Thyroid gland (tissue), 4 donors: ENCODE measurements at regions of chrX and their contacts with region 1.

Region 1: GRCh38 chrX:65948103-65948502 is 91.8 kb downstream of the VSIG4 start:
- DNase-seq: no peak
- H3K4me3 ChIP-seq: no peak overlapping the region
- H3K27ac ChIP-seq: no peak overlapping the region
- H3K4me1 ChIP-seq: no peaks in the 10 kb centered on the region
- H3K27me3 ChIP-seq: no peaks in the 10 kb centered on the region
- CTCF ChIP-seq: no peak
- POLR2A ChIP-seq: no peak

Region 2: DNA sequence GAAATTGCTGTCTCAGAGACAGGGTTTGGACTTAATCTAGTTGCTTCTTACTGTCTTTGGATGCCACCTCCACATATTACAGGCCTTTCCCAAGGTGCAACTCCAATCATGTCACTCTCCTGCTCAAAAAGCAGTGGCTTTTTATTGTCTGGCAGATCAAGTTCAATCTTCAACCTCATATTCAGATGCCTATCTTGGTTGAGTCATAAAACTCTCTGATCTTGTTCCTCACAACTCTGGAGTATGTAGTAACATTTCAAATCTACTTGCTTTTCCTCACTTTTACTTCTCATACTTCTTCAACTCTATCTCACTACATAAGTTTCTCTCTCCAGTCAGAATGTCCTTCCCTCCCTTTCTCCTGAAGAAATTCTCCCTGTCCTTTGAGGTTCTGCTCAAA is 88.8 kb before region 1 on chrX:
- intact Hi-C with region 1: loop called (anchors 10 kb)
- DNase-seq: no peak
- H3K4me3 ChIP-seq: no peak overlapping the region
- H3K27ac ChIP-seq: no peak overlapping the region
- H3K4me1 ChIP-seq: no peaks in the 10 kb centered on the region
- H3K27me3 ChIP-seq: no peaks in the 10 kb centered on the region
- CTCF ChIP-seq: no peak
- POLR2A ChIP-seq: no peak

Region 3: GRCh38 chrX:65997978-65998717 is 50.0 kb after region 1 on chrX:
- intact Hi-C with region 1: loop called (anchors 5 kb)
- DNase-seq: no peak
- H3K4me3 ChIP-seq: no peak overlapping the region
- H3K27ac ChIP-seq: no peak overlapping the region
- H3K4me1 ChIP-seq: no peaks in the 10 kb centered on the region
- H3K27me3 ChIP-seq: no peaks in the 10 kb centered on the region
- CTCF ChIP-seq: no peak
- POLR2A ChIP-seq: no peak

Region 4: GRCh38 chrX:66074920-66075879 is 127.1 kb after region 1 on chrX:
- intact Hi-C with region 1: no loop called
- DNase-seq: peak; percentile 6 to 8
- H3K4me3 ChIP-seq: no peak overlapping the region
- H3K27ac ChIP-seq: no peak overlapping the region
- H3K4me1 ChIP-seq: no peaks in the 10 kb centered on the region
- H3K27me3 ChIP-seq: no peaks in the 10 kb centered on the region
- CTCF ChIP-seq: no peak
- POLR2A ChIP-seq: no peak